GM12878 (cell line): ENCODE measurements at regions of chr6 and their contacts with region 1.

Region 1: GRCh38 chr6:135162678-135163439 is 18.2 kb upstream of the MYB start:
- DNase-seq: no peak
- ATAC-seq: peak; percentile 65
- H3K4me3 ChIP-seq: peak overlapping the region; percentile 49; the same call in 1 of the 2 replicates
- H3K27ac ChIP-seq: peak overlapping the region; percentile 75
- H3K4me1 ChIP-seq: peaks cover 28% of the 10 kb centered on the region
- H3K27me3 ChIP-seq: no peaks in the 10 kb centered on the region
- CTCF ChIP-seq: peak; percentile 64 to 93 (median 93)
- EP300 ChIP-seq: no peak
- POLR2A ChIP-seq: no peak; the same call in 1 of the 2 replicates
- RAD21 ChIP-seq: peak; percentile 51

Region 2: GRCh38 chr6:134422426-134423231 is 740.2 kb before region 1 on chr6:
- CTCF ChIA-PET with region 1: no interaction called
- POLR2A ChIA-PET with region 1: no interaction called
- RAD21 ChIA-PET with region 1: no interaction called
- SMC1A ChIA-PET with region 1: no interaction called
- in situ Hi-C with region 1: no loop called
- intact Hi-C with region 1: no loop called
- DNase-seq: no peak
- ATAC-seq: peak; percentile 74
- H3K4me3 ChIP-seq: no peak overlapping the region
- H3K27ac ChIP-seq: no peak overlapping the region
- H3K4me1 ChIP-seq: no peaks in the 10 kb centered on the region
- H3K27me3 ChIP-seq: no peaks in the 10 kb centered on the region
- CTCF ChIP-seq: no peak
- EP300 ChIP-seq: no peak
- POLR2A ChIP-seq: no peak
- RAD21 ChIP-seq: no peak

Region 3: DNA sequence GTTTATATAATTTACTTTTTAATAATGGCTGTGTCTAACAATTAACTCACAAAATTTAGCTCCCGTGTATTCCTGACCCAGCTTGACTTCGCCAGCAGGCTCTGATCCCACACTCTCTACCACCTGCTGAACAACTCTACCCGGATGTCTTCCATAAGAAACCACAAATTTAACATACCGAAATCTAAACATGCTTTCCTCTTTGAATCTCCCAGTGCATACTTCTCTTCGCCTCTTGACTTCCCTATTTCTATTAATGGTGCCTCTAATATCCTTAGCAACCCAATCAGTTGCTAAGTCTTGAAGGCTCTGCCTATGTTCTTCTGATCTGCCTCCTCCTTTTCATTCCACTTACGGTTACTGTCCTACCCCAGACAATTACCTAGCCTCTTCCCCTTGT is 13.6 kb after region 1 on chr6:
- CTCF ChIA-PET with region 1: interaction called, 128 read pairs
- POLR2A ChIA-PET with region 1: interaction called, 52 read pairs
- RAD21 ChIA-PET with region 1: interaction called, 98 read pairs
- SMC1A ChIA-PET with region 1: interaction called, 55 read pairs
- in situ Hi-C with region 1: no loop called
- intact Hi-C with region 1: no loop called
- DNase-seq: no peak
- ATAC-seq: no peak
- H3K4me3 ChIP-seq: no peak overlapping the region
- H3K27ac ChIP-seq: peak overlapping the region; percentile 28; the same call in 1 of the 2 replicates
- H3K4me1 ChIP-seq: peaks cover 24% of the 10 kb centered on the region
- H3K27me3 ChIP-seq: no peaks in the 10 kb centered on the region
- CTCF ChIP-seq: no peak
- EP300 ChIP-seq: no peak
- POLR2A ChIP-seq: no peak
- RAD21 ChIP-seq: no peak